ENCODE measurements at regions of chr16 and their contacts with region 1.

Region 1: GRCh38 chr16:81696961-81697615 is 82.0 kb upstream of the PLCG2 start:
- DNase-seq: peak; percentile 57 to 82
- H3K4me3 ChIP-seq: no peak overlapping the region
- H3K27ac ChIP-seq: no peak overlapping the region
- H3K4me1 ChIP-seq: no peaks in the 10 kb centered on the region
- H3K27me3 ChIP-seq: no peaks in the 10 kb centered on the region
- CTCF ChIP-seq: peak; percentile 93 to 99 (median 98)
- EP300 ChIP-seq: no peak
- POLR2A ChIP-seq: no peak
- RAD21 ChIP-seq: peak; percentile 94 to 97

Region 2: GRCh38 chr16:81403616-81404373 is 293.3 kb before region 1 on chr16:
- CTCF ChIA-PET with region 1: interaction called, 13 read pairs
- POLR2A ChIA-PET with region 1: no interaction called
- DNase-seq: peak; percentile 53 to 97
- H3K4me3 ChIP-seq: peak overlapping the region in 2 of 4 experiments; percentile 19 to 49; a peak in 4 of 8 replicates
- H3K27ac ChIP-seq: no peak overlapping the region
- H3K4me1 ChIP-seq: peaks cover 0 to 5% (median 2%) of the 10 kb centered on the region in 4 experiments; a peak in 4 of 7 replicates
- H3K27me3 ChIP-seq: no peaks in the 10 kb centered on the region; a peak in 2 of 7 replicates
- CTCF ChIP-seq: peak; percentile 92 to 95 (median 93)
- EP300 ChIP-seq: no peak
- POLR2A ChIP-seq: no peak
- RAD21 ChIP-seq: peak; percentile 98 to 99

Region 3: GRCh38 chr16:81623363-81624102 is 73.6 kb before region 1 on chr16:
- CTCF ChIA-PET with region 1: interaction called, 134 read pairs
- POLR2A ChIA-PET with region 1: interaction called, 7 read pairs
- DNase-seq: no peak
- H3K4me3 ChIP-seq: no peak overlapping the region
- H3K27ac ChIP-seq: no peak overlapping the region
- H3K4me1 ChIP-seq: peaks cover 0 to 3% (median 1%) of the 10 kb centered on the region in 4 experiments; a peak in 3 of 7 replicates
- H3K27me3 ChIP-seq: no peaks in the 10 kb centered on the region
- CTCF ChIP-seq: peak in 2 of 3 experiments; percentile 67 to 69; a peak in 3 of 4 replicates
- EP300 ChIP-seq: no peak
- POLR2A ChIP-seq: no peak
- RAD21 ChIP-seq: peak; percentile 82 to 83

Region 4: GRCh38 chr16:81652798-81653505 is 44.1 kb before region 1 on chr16:
- CTCF ChIA-PET with region 1: interaction called, 10 read pairs
- POLR2A ChIA-PET with region 1: no interaction called
- DNase-seq: no peak
- H3K4me3 ChIP-seq: peak overlapping the region in 1 of 4 experiments; percentile 9; a peak in 1 of 8 replicates
- H3K27ac ChIP-seq: peak overlapping the region; percentile 14; the same call in 1 of the 2 replicates
- H3K4me1 ChIP-seq: peaks cover 7 to 23% (median 17%) of the 10 kb centered on the region in 4 experiments
- H3K27me3 ChIP-seq: no peaks in the 10 kb centered on the region
- CTCF ChIP-seq: no peak
- EP300 ChIP-seq: no peak
- POLR2A ChIP-seq: no peak
- RAD21 ChIP-seq: no peak

Region 5: DNA sequence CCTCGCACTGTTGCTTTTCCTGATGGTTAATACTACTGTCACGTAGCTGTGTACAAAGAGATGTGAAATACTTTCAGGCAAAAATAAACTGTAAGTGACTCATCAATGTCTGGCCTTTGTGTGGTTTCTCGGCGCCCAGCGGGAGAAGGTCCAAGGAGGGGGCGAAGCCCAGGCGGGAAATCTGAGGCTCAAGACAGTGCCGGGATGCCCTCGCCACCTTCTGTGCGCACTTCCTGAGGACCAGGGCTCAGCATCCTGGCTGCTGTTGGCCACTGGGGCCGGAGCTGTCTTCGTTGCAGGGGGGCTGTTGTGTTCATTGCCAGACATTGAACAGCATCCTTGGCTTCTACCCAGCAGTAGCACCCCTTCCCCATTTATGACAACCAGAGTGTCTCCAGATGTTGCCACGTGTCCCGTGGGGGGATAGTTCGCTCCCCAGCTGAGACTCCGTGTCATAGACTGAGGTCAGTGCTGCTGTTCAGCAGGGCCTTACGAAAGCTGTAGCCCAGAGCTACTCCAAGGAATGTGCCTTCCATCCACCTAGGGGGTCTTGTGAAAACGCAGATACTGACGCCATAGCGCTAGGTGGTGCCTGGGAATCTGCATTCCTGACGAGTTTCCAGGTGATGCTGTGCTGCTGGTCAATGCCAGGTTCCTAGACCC is 14.7 kb after region 1 on chr16:
- CTCF ChIA-PET with region 1: interaction called, 23 read pairs
- POLR2A ChIA-PET with region 1: no interaction called
- DNase-seq: no peak
- H3K4me3 ChIP-seq: no peak overlapping the region
- H3K27ac ChIP-seq: no peak overlapping the region
- H3K4me1 ChIP-seq: peaks cover 0 to 41% (median 26%) of the 10 kb centered on the region in 4 experiments; a peak in 6 of 7 replicates
- H3K27me3 ChIP-seq: no peaks in the 10 kb centered on the region
- CTCF ChIP-seq: no peak
- EP300 ChIP-seq: no peak
- POLR2A ChIP-seq: no peak
- RAD21 ChIP-seq: no peak; a peak in 1 of 4 replicates

Region 6: DNA sequence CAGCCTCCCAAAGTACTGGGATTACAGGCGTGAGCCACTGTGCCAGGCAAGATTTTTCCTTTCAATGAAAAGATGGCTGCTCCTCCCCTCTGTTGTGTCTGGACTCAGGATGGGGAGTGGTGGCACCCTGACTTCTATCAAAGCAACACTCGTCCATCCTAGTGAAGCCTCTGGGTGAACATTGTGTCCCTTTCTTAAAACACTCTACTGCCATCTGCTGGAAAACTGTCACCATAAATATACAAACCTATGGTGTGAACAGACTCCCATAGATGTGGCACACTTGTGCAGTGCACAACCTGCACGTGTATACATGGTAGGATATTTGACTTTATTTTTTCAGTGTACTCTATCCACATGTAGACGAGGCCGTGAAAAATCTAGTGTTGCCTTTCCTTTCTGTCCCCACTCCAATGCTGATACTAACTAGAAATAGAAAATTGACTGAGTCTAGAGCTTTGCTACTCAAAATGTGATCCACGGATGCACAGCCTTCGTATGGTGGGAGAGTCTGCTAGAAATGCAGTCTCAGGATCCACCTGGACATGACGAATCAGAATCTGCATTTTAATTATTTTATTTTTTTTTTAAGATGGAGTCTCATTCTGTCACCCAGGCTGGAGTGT is 26.1 kb after region 1 on chr16:
- CTCF ChIA-PET with region 1: interaction called, 24 read pairs
- POLR2A ChIA-PET with region 1: no interaction called
- DNase-seq: no peak
- H3K4me3 ChIP-seq: no peak overlapping the region
- H3K27ac ChIP-seq: no peak overlapping the region
- H3K4me1 ChIP-seq: no peaks in the 10 kb centered on the region; a peak in 2 of 7 replicates
- H3K27me3 ChIP-seq: no peaks in the 10 kb centered on the region
- CTCF ChIP-seq: peak in 2 of 3 experiments; percentile 73 to 74; a peak in 3 of 4 replicates
- EP300 ChIP-seq: no peak
- POLR2A ChIP-seq: no peak
- RAD21 ChIP-seq: peak; percentile 90 to 92

Region 7: GRCh38 chr16:81737885-81738786 is 41.0 kb after region 1 on chr16:
- CTCF ChIA-PET with region 1: interaction called, 25 read pairs
- POLR2A ChIA-PET with region 1: no interaction called
- DNase-seq: peak; percentile 73 to 92
- H3K4me3 ChIP-seq: 0 out of 8 replicates have a peak overlapping the region, but pooled peaks of 1 of the 4 experiments have one; percentile 30
- H3K27ac ChIP-seq: no peak overlapping the region
- H3K4me1 ChIP-seq: peaks cover 0 to 2% (median 0%) of the 10 kb centered on the region in 4 experiments; a peak in 3 of 7 replicates
- H3K27me3 ChIP-seq: no peaks in the 10 kb centered on the region
- CTCF ChIP-seq: peak; percentile 88 to 95 (median 89)
- EP300 ChIP-seq: peak in 1 of 2 experiments; percentile 71; a peak in 1 of 3 replicates
- POLR2A ChIP-seq: no peak
- RAD21 ChIP-seq: peak; percentile 96 to 98